ENCODE measurements at regions of chr4 and their contacts with region 1.

Region 1: GRCh38 chr4:185119927-185120630 is 23.0 kb upstream of the SLC25A4 start:
- DNase-seq: no peak
- CTCF ChIP-seq: no peak

Region 2: GRCh38 chr4:185062606-185063005 is 57.5 kb before region 1 on chr4:
- CTCF ChIA-PET with region 1: no interaction called
- POLR2A ChIA-PET with region 1: no interaction called
- DNase-seq: no peak
- CTCF ChIP-seq: no peak

Region 3: DNA sequence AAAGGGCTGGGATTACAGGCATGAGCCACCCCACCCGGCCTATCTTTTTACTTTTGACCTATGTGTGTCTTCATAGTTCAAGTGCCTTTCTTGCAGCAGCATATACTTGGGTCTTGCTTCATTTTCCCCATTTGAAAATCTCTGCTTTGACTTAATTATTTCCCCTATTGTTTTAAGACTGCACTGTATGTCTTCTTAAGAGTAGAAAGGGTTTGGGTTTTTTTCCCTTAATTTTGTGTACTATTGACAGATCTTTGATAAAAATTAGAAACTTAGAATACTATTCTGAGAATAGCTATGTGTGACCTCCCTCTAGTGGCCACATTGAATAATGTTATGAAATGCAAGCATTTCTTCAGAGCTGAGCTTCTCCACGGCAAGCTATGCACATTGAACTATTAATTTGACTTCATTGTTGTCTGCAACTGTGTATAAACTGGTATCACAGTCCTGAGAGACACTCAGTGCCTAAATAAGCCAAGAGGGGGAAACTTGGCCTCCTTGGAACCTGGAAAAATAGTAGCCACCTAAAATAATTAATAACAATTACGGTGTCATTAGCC is 14.3 kb after region 1 on chr4:
- CTCF ChIA-PET with region 1: interaction called, 11 read pairs
- POLR2A ChIA-PET with region 1: no interaction called
- DNase-seq: peak; percentile 69
- CTCF ChIP-seq: peak; percentile 72

Region 4: DNA sequence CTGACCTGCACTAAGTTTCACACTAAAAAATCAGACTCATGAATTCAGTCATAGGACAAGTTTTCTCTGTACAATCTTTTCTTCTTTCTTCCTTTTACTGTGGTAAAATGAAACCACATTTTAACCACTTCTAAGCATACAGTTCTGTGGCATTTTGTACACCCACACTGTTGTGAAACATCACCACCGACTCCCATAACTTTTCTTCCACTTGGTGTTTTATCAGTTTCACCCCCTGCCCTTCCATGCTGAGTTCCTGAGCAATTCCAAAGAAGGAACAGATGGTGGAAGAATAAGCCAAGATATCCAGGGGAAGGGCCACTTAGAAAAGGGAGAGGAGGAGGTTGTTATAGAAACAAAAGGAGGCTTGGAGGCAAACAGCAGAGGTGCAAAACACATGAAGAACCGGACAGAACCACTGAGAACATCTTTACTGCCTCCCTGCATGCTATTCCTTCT is 45.6 kb after region 1 on chr4:
- CTCF ChIA-PET with region 1: no interaction called
- POLR2A ChIA-PET with region 1: no interaction called
- DNase-seq: peak; percentile 56
- CTCF ChIP-seq: no peak

Region 5: DNA sequence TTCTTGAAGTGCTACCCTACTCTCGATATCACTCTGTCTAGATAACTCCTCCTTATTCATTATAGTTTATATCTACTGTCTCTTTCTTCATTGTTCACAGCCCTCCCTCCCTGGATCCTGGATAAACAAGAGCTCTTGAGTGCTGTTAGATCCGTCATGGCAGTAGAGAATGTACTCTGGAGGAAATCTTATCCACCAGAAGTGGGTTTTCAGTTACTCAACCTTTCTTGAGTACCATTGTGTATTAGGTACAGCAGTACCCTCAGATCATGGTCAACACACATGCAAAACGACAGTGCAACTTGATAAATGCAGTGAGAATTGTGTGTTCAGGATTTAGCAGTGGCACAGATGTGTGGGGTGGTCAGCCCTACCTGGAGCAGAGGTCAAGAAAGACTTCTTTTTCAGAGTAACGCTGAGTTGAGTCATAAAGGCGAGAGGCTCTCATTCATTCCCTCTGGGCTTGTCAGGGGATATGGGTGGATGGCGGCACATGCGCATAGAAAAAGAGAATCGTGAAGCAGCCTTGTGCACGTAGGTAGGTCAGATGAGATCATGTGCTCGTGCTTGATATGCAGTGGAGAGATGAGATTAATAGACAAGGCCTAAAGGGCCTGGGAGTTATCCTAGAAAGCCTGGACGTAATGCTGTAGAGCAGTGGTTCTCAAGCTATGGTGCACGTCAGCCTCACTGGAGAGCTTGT is 178.8 kb after region 1 on chr4:
- CTCF ChIA-PET with region 1: no interaction called
- POLR2A ChIA-PET with region 1: no interaction called
- DNase-seq: no peak
- CTCF ChIP-seq: no peak

Measured in GM10248 (cell line).